ENCODE measurements at regions of chr3 and their contacts with region 1.

Region 1: DNA sequence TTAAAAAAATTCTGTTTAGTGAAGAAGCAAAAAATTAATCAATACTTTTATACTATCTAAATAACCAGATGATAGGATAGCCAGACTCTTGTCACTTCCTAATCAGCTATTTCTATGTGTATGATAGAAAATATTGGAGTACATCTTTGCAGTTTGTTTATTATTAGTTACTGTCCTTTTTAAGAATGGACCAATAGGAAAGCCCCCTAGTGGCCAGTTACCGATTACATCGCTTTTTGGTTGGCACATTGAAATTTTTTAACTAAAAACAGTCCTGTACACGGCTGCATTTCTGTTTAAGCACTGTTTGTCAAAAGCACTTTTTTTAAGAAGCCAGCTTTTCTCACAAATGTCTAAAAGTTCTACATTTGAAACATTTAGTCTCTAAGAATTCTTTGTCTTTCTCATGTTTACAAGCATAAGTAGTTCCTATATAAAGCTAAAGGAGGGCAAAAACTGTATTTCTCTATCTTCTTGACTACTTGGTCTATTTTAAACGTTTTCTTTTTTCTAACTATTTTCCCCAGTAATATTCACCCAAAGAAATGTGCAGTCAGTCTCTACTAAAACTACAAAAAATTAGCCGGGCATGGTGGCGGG is 253.2 kb upstream of the LRTM1 start:
- DNase-seq: peak; percentile 63
- H3K4me3 Mint-ChIP-seq: no peak overlapping the region
- H3K27ac Mint-ChIP-seq: no peak overlapping the region
- H3K4me1 Mint-ChIP-seq: peaks cover 11% of the 10 kb centered on the region
- H3K27me3 Mint-ChIP-seq: no peaks in the 10 kb centered on the region
- CTCF ChIP-seq: peak; percentile 56

Region 2: DNA sequence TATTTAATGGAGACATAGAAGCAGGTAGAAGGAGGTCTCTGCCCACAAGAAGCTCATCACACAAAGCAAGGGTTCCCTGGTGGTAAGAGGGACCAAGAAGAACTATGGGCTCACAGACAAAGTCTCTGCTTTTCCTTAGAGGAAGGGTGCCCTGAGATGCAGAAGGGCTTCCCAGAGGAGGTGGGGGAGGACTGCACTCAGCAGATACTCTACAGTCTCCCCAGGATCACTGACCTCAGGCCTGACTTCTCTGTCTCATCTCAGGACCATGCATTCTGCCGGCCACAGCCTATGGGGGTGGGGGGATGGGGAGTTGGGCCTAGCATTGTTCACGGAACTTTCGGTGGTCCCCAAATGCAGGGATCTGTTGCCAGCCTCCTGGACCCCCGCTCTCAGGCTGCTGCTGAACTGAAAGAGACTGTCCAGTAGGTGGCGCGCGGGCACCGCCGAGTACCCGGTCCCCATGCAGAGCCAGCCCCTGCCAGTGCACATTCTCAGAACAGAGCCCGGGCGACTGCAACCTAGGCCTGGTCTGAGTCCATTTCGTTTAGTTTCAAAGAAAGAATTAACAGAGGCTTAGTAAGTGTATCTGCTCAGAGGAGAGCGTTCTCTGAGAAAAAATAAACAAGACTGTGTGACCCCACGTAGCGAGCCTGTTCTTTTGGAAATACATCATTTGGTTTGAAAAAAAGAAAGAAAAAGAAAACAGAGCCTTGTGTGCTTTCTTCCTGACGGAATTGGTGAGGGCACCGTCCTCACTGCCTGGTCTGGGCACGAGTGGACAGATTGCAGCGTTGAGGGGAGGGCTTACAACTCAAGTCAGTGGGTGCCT is 327.2 kb before region 1 on chr3:
- CTCF ChIA-PET with region 1: interaction called, 5 read pairs
- POLR2A ChIA-PET with region 1: no interaction called
- intact Hi-C with region 1: loop called (anchors 5 kb)
- DNase-seq: peak; percentile 61
- H3K4me3 Mint-ChIP-seq: no peak overlapping the region
- H3K27ac Mint-ChIP-seq: peak overlapping the region; percentile 75
- H3K4me1 Mint-ChIP-seq: peaks cover 23% of the 10 kb centered on the region
- H3K27me3 Mint-ChIP-seq: peaks cover 16% of the 10 kb centered on the region
- CTCF ChIP-seq: peak; percentile 79

Region 3: DNA sequence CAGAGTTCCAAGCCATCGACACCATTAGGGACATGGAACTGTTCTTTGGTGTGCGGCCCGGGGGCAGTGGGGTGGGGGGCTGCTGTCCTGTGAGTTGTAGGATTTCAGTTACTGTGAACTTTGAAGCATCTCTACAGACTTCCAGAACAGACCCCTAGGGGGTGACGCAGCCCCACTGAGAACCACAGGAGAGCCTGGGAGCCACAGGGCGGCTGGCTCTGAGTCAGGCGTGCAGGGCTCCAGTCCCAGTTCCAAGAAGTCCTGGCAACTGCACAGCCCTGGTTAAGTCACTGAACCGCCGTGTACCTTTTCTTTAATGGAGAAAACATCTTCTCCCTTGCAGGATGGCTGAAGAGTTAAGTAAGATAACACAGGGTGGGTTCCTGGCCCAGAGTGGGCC is 229.6 kb before region 1 on chr3:
- CTCF ChIA-PET with region 1: interaction called, 4 read pairs
- POLR2A ChIA-PET with region 1: no interaction called
- intact Hi-C with region 1: loop called (anchors 5 kb)
- DNase-seq: peak; percentile 78
- H3K4me3 Mint-ChIP-seq: no peak overlapping the region
- H3K27ac Mint-ChIP-seq: no peak overlapping the region
- H3K4me1 Mint-ChIP-seq: peaks cover 20% of the 10 kb centered on the region
- H3K27me3 Mint-ChIP-seq: no peaks in the 10 kb centered on the region
- CTCF ChIP-seq: peak; percentile 50

Region 4: GRCh38 chr3:55042591-55042990 is 138.4 kb before region 1 on chr3:
- CTCF ChIA-PET with region 1: no interaction called
- POLR2A ChIA-PET with region 1: no interaction called
- intact Hi-C with region 1: loop called (anchors 5 kb)
- DNase-seq: peak; percentile 26
- H3K4me3 Mint-ChIP-seq: no peak overlapping the region
- H3K27ac Mint-ChIP-seq: no peak overlapping the region
- H3K4me1 Mint-ChIP-seq: no peaks in the 10 kb centered on the region
- H3K27me3 Mint-ChIP-seq: no peaks in the 10 kb centered on the region
- CTCF ChIP-seq: peak; percentile 30